Ascending aorta (tissue), 2 donors: ENCODE measurements at regions of chr11 and their contacts with region 1.

Region 1: GRCh38 chr11:64269380-64270234 is 14.9 kb downstream of the BAD start:
- DNase-seq: peak; percentile 96 to 99
- H3K4me3 ChIP-seq: peak overlapping the region; percentile 71 to 99
- H3K27ac ChIP-seq: peak overlapping the region; percentile 90 to 98
- H3K4me1 ChIP-seq: peaks cover 17 to 32% of the 10 kb centered on the region in 2 donors
- H3K27me3 ChIP-seq: no peaks in the 10 kb centered on the region
- CTCF ChIP-seq: peak in 2 of 3 experiments; percentile 15 to 35

Region 2: DNA sequence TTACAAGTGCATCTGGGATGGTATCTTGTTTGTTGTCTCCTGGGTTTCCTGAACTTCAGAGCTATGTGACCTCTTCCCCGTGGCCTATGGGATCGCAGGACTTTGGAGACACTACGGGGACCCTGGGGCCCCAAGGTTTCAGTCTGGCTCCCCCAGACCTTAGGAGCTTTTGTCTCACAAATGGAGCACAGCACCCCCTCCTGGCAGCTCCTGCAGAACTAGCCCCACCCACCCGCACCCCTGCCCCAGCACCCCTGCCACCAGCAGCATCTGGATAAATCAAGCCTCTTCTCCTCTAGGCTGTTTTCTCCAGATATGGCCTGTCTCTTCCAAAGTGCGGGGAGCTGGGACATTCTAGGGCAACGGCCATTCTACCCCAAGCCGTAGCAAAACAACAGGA is 363.0 kb before region 1 on chr11:
- intact Hi-C with region 1: no loop called
- DNase-seq: no peak
- H3K4me3 ChIP-seq: no peak overlapping the region
- H3K27ac ChIP-seq: no peak overlapping the region
- H3K4me1 ChIP-seq: peaks cover 4 to 22% of the 10 kb centered on the region in 2 donors
- H3K27me3 ChIP-seq: no peaks in the 10 kb centered on the region
- CTCF ChIP-seq: peak in 2 of 3 experiments; percentile 11 to 28

Region 3: DNA sequence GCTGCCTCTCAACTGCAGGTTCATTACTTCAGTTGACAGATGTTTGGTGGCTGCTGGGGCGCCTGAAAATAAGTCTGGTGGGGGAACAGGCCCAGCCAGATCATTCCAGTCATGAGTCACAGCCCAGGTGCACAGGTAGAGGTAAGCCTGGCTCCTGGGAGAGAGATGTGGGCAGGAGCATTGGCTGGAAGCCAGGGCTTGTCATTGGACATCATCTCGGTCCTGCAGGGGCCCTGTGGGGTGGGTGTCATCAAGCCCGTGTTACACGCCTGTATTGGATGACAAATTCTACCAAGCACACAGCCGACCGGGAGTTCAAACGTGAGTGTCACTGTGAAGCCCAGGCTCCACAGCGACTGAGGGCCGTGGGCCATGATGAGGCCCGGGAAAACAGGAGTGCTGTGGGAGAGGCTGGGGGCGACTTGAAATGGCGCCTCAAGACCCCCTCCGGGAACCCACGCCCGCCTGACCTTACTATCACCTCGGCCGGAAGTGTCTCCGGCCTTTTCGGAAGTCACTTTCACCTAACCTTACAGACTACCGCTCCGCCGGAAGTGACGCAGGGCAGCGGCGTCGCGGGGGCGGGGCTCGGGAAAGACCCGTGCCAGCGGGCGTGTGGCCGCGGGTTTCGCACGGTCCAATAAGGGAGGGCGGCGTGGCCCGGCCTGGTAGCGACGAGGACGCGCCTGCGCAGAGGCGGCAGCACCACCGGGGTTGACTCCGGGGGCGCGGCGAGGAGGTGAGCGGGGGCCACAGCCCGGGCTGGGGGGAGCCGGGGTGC is 29.0 kb before region 1 on chr11 and contains the start of gene FKBP2:
- intact Hi-C with region 1: loop called (anchors 1 kb)
- DNase-seq: peak; percentile 95 to 99
- H3K4me3 ChIP-seq: peak within 1 kb of the TSS; percentile 91 to 97
- H3K27ac ChIP-seq: peak within 1 kb of the TSS; percentile 99
- H3K4me1 ChIP-seq: peaks cover 3 to 33% of the 10 kb centered on the region in 2 donors
- H3K27me3 ChIP-seq: no peaks in the 10 kb centered on the region
- CTCF ChIP-seq: no peak
- total RNA-seq, gene FKBP2: 17.7 TPM

Region 4: GRCh38 chr11:64251016-64251752 is 18.4 kb before region 1 on chr11 and contains the start of gene PLCB3:
- intact Hi-C with region 1: loop called (anchors 1 kb)
- DNase-seq: no peak
- H3K4me3 ChIP-seq: peak within 1 kb of the TSS; percentile 74 to 86
- H3K27ac ChIP-seq: peak within 1 kb of the TSS; percentile 53 to 68
- H3K4me1 ChIP-seq: peaks cover 15 to 29% of the 10 kb centered on the region in 2 donors
- H3K27me3 ChIP-seq: no peaks in the 10 kb centered on the region
- CTCF ChIP-seq: peak; percentile 67 to 82 (median 73)
- total RNA-seq, gene PLCB3: 54.0 TPM

Region 5: GRCh38 chr11:64284048-64284961 is 14.7 kb after region 1 on chr11 and contains the start of gene BAD:
- intact Hi-C with region 1: loop called (anchors 1 kb)
- DNase-seq: peak; percentile 77 to 97
- H3K4me3 ChIP-seq: peak within 1 kb of the TSS; percentile 82 to 96
- H3K27ac ChIP-seq: peak within 1 kb of the TSS; percentile 87 to 95
- H3K4me1 ChIP-seq: peaks cover 4 to 20% of the 10 kb centered on the region in 2 donors
- H3K27me3 ChIP-seq: no peaks in the 10 kb centered on the region
- CTCF ChIP-seq: no peak
- total RNA-seq, gene BAD: 175 TPM

Region 6: GRCh38 chr11:64317957-64318693 is 48.5 kb after region 1 on chr11 and contains the start of gene PRDX5:
- intact Hi-C with region 1: loop called (anchors 1 kb)
- DNase-seq: peak; percentile 89 to 98
- H3K4me3 ChIP-seq: peak within 1 kb of the TSS; percentile 75 to 93
- H3K27ac ChIP-seq: peak within 1 kb of the TSS; percentile 95 to 99
- H3K4me1 ChIP-seq: peaks cover 7 to 10% of the 10 kb centered on the region in 2 donors
- H3K27me3 ChIP-seq: no peaks in the 10 kb centered on the region
- CTCF ChIP-seq: peak in 2 of 3 experiments; percentile 36 to 47
- total RNA-seq, gene PRDX5: 153 TPM